ENCODE measurements at regions of chr5 and their contacts with region 1.

Region 1: GRCh38 chr5:2038321-2039179 is 155.8 kb upstream of the IRX4 start:
- DNase-seq: peak; percentile 42
- H3K4me3 ChIP-seq: peak overlapping the region; percentile 53 to 58 (median 57)
- H3K27ac ChIP-seq: no peak overlapping the region
- H3K4me1 ChIP-seq: peaks cover 12% of the 10 kb centered on the region
- H3K27me3 ChIP-seq: no peaks in the 10 kb centered on the region
- CTCF ChIP-seq: peak; percentile 59 to 72

Region 2: GRCh38 chr5:1666812-1667588 is 371.6 kb before region 1 on chr5:
- CTCF ChIA-PET with region 1: no interaction called
- dilution Hi-C with region 1: no loop called
- in situ Hi-C with region 1: no loop called
- intact Hi-C with region 1: loop called (anchors 10 kb)
- DNase-seq: no peak
- H3K4me3 ChIP-seq: no peak overlapping the region
- H3K27ac ChIP-seq: no peak overlapping the region
- H3K4me1 ChIP-seq: no peaks in the 10 kb centered on the region
- H3K27me3 ChIP-seq: peaks cover 13% of the 10 kb centered on the region
- CTCF ChIP-seq: peak; percentile 18 to 52

Region 3: GRCh38 chr5:2075365-2075764 is 36.8 kb after region 1 on chr5:
- CTCF ChIA-PET with region 1: no interaction called
- dilution Hi-C with region 1: no loop called
- in situ Hi-C with region 1: no loop called
- intact Hi-C with region 1: no loop called
- DNase-seq: no peak
- H3K4me3 ChIP-seq: no peak overlapping the region
- H3K27ac ChIP-seq: no peak overlapping the region
- H3K4me1 ChIP-seq: no peaks in the 10 kb centered on the region
- H3K27me3 ChIP-seq: no peaks in the 10 kb centered on the region
- CTCF ChIP-seq: no peak

Region 4: DNA sequence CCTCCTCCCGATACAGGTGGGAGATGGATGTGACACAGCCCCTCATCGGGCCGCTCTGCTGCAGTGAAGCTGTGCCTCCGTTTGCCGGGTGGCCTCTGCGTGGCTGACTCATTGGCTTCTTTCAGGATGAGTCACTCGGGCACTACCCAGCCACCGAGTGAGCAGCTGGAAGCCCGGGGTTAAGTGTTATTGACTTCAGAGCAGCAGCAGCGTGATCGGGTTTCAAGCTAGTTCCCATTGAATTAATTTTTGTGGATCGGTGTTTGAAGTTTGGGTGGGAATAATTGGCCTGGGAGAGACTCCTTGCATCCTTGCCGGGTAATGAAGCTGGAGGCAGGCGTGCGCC is 110.6 kb after region 1 on chr5:
- CTCF ChIA-PET with region 1: no interaction called
- dilution Hi-C with region 1: no loop called
- in situ Hi-C with region 1: no loop called
- intact Hi-C with region 1: loop called (anchors 2 kb)
- DNase-seq: peak; percentile 65
- H3K4me3 ChIP-seq: no peak overlapping the region
- H3K27ac ChIP-seq: no peak overlapping the region
- H3K4me1 ChIP-seq: no peaks in the 10 kb centered on the region
- H3K27me3 ChIP-seq: no peaks in the 10 kb centered on the region
- CTCF ChIP-seq: no peak